ENCODE measurements at regions of chr16 and their contacts with region 1.

Region 1: GRCh38 chr16:65044873-65045272 is 77.0 kb downstream of the CDH11 start:
- DNase-seq: no peak
- ATAC-seq: no peak

Region 2: DNA sequence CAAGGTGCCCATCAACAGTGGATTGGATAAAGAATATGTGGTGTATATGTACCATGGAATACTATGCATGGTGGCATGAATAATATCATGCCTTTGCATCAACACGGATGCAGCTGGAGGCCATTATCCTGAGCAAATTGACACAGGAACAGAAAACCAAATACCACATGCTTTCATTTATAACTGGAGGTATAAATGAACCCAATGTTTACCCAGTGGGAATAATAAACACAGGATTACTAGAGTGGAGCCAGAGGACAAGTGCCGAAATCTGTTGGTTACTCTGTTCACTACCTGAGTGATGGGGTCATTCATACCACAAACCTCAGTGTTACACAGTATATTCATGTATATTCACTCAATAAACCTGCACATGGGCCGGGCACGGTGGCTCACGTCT is 48.2 kb before region 1 on chr16:
- intact Hi-C with region 1: no loop called
- DNase-seq: no peak
- ATAC-seq: no peak

Region 3: DNA sequence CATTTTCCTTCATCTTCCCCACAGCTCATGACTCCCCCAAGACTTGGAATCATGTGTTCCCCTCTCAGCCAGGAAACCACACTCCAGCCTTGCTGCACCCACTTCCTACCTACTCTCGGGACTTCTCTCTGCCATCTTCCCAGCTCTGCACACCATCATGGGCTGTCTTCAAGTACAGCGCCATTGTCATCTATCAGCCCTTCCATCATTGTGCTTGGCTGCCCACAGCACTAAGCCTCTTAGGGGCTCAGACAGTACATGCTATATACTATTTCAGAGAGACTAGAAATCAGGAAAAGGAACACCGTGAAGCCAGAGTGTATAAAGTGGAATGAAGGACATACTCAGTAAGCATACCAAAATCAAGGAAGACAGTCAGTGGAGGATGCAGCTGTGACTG is 12.3 kb after region 1 on chr16:
- intact Hi-C with region 1: loop called (anchors 1 kb)
- DNase-seq: no peak
- ATAC-seq: no peak